GM12878 (cell line): ENCODE measurements at regions of chr15 and their contacts with region 1.

Region 1: DNA sequence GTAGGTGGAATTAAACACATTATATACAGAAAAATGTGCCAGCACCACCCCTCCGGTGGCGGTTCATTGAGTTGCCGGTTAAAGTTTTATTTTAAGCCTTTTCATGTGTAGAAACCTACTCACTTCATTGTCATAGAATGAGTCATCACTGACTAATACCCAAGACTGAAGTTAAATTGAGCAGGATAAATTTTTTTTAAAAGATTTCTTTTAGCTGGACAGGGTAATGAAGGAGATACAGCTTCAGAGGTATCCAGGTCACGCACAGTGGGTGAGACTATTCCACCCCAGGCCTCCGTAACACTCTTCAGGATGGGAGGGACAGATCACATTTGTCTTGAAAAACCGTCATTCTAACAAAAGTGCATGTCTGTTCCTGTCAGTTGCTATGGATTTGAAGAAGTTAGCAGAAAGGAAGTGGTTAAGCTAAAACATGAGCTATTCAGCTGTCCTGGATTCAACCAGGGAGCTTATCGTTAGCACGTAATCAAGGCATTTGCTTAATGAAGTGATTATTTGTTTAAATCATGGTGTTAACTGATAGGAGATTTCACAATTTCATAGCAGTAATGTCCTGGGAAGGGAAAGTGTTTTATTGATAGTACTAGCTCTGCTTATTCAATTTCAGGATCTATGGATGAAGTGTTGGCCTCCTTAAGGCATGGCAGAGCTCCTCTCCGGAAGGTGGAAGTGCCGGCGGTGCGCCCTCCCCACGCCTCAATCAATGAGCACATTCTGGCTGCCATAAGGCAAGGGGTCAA is 23.4 kb downstream of the WHAMM start:
- DNase-seq: peak; percentile 53
- ATAC-seq: peak; percentile 90
- H3K4me3 ChIP-seq: 0 out of 2 replicates have a peak overlapping the region, but pooled peaks have one; percentile 28
- H3K27ac ChIP-seq: peak overlapping the region; percentile 30
- H3K4me1 ChIP-seq: peaks cover 18% of the 10 kb centered on the region
- H3K27me3 ChIP-seq: no peaks in the 10 kb centered on the region
- CTCF ChIP-seq: no peak
- EP300 ChIP-seq: peak in 1 of 2 experiments; percentile 65; a peak in 2 of 4 replicates
- POLR2A ChIP-seq: no peak
- RAD21 ChIP-seq: no peak

Region 2: GRCh38 chr15:82530606-82531379 is 302.0 kb before region 1 on chr15:
- CTCF ChIA-PET with region 1: interaction called, 10 read pairs
- POLR2A ChIA-PET with region 1: no interaction called
- RAD21 ChIA-PET with region 1: no interaction called
- SMC1A ChIA-PET with region 1: no interaction called
- in situ Hi-C with region 1: no loop called
- intact Hi-C with region 1: loop called (anchors 10 kb)
- DNase-seq: peak; percentile 55
- ATAC-seq: peak; percentile 82
- H3K4me3 ChIP-seq: peak overlapping the region; percentile 5; the same call in 1 of the 2 replicates
- H3K27ac ChIP-seq: peak overlapping the region; percentile 47
- H3K4me1 ChIP-seq: peaks cover 8% of the 10 kb centered on the region
- H3K27me3 ChIP-seq: no peaks in the 10 kb centered on the region
- CTCF ChIP-seq: peak; percentile 62 to 84 (median 80)
- EP300 ChIP-seq: 0 out of 4 replicates have a peak, but pooled peaks of 1 of the 2 experiments have one; percentile 12
- POLR2A ChIP-seq: no peak
- RAD21 ChIP-seq: peak; percentile 28; the same call in 1 of the 2 replicates

Region 3: GRCh38 chr15:82749951-82750830 is 82.6 kb before region 1 on chr15:
- CTCF ChIA-PET with region 1: interaction called, 4 read pairs
- POLR2A ChIA-PET with region 1: interaction called, 8 read pairs
- RAD21 ChIA-PET with region 1: interaction called, 5 read pairs
- SMC1A ChIA-PET with region 1: interaction called, 14 read pairs
- in situ Hi-C with region 1: no loop called
- intact Hi-C with region 1: no loop called
- DNase-seq: peak; percentile 57
- ATAC-seq: peak; percentile 96
- H3K4me3 ChIP-seq: peak overlapping the region; percentile 87
- H3K27ac ChIP-seq: peak overlapping the region; percentile 90
- H3K4me1 ChIP-seq: peaks cover 7% of the 10 kb centered on the region; the same call in 1 of the 2 replicates
- H3K27me3 ChIP-seq: no peaks in the 10 kb centered on the region
- CTCF ChIP-seq: no peak
- EP300 ChIP-seq: 0 out of 4 replicates have a peak, but pooled peaks have one; percentile 15 to 17
- POLR2A ChIP-seq: peak; percentile 96
- RAD21 ChIP-seq: no peak

Region 4: DNA sequence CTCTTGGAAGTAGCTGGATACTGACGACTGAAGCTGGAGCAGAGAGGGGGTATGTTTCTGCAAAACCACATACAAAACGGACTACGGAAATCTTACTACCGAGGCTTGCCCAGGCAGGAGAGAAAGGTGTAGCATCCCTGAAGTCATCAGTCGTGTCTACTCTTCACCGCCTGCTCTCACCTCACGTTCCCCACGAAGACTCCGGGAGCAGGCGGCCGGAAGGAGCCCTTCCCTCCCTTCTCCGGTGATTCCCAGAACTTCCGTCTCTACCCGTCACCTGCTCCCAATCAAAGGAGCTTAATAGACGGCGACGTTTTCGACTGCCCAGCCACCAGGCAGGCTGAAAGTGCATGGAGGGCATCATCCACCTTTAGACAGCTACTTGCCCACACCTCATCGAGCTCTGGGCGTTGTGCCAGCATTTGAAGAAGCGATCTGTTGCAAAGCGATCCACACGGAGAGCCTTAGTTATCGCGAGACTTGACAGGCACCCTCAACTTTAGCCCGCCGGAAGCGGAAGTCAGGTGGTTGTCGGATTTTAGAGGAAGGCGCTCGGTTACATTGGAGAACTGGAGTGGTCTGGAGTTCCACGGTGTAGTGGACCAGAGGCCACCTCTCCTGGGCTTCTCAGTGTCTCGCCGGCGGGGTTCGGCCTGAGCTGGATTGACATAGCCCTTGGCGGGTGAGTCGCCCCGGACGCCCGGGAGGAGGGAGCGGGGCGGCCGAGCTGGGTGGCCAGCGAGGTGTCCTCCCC is 153.1 kb after region 1 on chr15 and contains the start of gene RAMAC:
- CTCF ChIA-PET with region 1: no interaction called
- POLR2A ChIA-PET with region 1: no interaction called
- RAD21 ChIA-PET with region 1: interaction called, 3 read pairs
- SMC1A ChIA-PET with region 1: no interaction called
- in situ Hi-C with region 1: no loop called
- intact Hi-C with region 1: loop called (anchors 5 kb)
- DNase-seq: peak; percentile 93
- ATAC-seq: peak; percentile 97
- H3K4me3 ChIP-seq: peak within 1 kb of the TSS; percentile 84
- H3K27ac ChIP-seq: peak within 1 kb of the TSS; percentile 71
- H3K4me1 ChIP-seq: peaks cover 8% of the 10 kb centered on the region
- H3K27me3 ChIP-seq: no peaks in the 10 kb centered on the region
- CTCF ChIP-seq: no peak
- EP300 ChIP-seq: no peak
- POLR2A ChIP-seq: peak; percentile 88
- RAD21 ChIP-seq: no peak
- polyA plus RNA-seq, gene RAMAC: 79.3 to 109 TPM